ENCODE measurements at regions of chr1 and their contacts with region 1.

Region 1: GRCh38 chr1:110087812-110088738 is 17.6 kb upstream of the ALX3 start:
- DNase-seq: peak; percentile 53
- H3K4me3 ChIP-seq: no peak overlapping the region
- H3K27ac ChIP-seq: no peak overlapping the region
- H3K4me1 ChIP-seq: peaks cover 6% of the 10 kb centered on the region
- H3K27me3 ChIP-seq: peaks cover 49% of the 10 kb centered on the region in 2 experiments
- CTCF ChIP-seq: peak; percentile 57 to 66
- POLR2A ChIP-seq: no peak

Region 2: DNA sequence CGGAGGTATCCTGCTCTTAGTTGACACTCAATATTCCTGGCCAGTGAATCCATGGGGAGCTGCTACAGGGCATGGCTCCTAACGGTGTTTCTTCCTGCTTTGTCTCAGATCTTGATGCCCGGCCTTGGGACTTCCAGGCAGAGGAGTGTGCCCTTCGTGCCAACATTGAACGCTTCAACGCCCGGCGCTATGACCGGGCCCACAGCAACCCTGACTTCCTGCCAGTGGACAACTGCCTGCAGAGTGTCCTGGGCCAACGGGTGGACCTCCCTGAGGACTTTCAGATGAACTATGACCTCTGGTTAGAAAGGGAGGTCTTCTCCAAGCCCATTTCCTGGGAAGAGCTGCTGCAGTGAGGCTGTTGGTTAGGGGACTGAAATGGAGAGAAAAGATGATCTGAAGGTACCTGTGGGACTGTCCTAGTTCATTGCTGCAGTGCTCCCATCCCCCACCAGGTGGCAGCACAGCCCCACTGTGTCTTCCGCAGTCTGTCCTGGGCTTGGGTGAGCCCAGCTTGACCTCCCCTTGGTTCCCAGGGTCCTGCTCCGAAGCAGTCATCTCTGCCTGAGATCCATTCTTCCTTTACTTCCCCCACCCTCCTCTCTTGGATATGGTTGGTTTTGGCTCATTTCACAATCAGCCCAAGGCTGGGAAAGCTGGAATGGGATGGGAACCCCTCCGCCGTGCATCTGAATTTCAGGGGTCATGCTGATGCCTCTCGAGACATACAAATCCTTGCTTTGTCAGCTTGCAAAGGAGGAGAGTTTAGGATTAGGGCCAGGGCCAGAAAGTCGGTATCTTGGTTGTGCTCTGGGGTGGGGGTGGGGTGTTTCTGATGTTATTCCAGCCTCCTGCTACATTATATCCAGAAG is 34.3 kb before region 1 on chr1:
- CTCF ChIA-PET with region 1: interaction called, 23 read pairs
- POLR2A ChIA-PET with region 1: no interaction called
- dilution Hi-C with region 1: no loop called
- intact Hi-C with region 1: no loop called
- DNase-seq: peak; percentile 39
- H3K4me3 ChIP-seq: no peak overlapping the region
- H3K27ac ChIP-seq: no peak overlapping the region
- H3K4me1 ChIP-seq: no peaks in the 10 kb centered on the region
- H3K27me3 ChIP-seq: no peaks in the 10 kb centered on the region
- CTCF ChIP-seq: peak; percentile 83 to 97
- POLR2A ChIP-seq: no peak

Region 3: DNA sequence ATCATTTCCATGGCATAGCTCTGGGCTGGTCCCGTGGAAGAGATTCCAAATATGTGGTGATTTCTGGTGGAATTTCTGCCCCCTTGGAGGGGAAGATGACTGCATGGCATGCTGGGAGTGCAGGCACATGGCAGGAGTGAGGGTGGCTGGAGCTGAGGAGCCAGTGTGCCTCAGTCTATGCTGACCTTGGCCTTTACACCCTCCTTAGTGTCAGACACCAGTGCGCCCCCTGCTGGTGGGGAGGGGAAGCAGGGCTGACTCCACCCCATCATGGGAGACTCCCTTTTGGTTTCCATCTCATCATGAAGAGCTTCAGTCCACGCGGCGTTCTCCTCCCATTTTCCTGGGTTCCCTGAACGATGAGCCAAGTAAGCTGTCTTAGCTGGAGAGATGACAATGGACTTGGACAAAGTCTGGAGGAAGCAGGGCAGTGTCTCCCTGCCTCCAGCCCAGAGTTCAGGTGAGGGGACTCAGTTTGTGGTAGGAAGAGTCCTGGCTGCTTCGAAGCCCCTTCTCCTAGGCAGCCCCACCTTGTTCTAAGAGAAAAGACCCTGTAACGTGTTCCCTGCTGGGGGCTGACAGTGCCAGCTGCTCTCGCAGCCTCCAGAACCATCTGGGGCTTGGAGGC is 27.9 kb before region 1 on chr1:
- CTCF ChIA-PET with region 1: interaction called, 17 read pairs
- POLR2A ChIA-PET with region 1: no interaction called
- dilution Hi-C with region 1: no loop called
- intact Hi-C with region 1: no loop called
- DNase-seq: peak; percentile 22
- H3K4me3 ChIP-seq: no peak overlapping the region
- H3K27ac ChIP-seq: no peak overlapping the region
- H3K4me1 ChIP-seq: no peaks in the 10 kb centered on the region
- H3K27me3 ChIP-seq: no peaks in the 10 kb centered on the region
- CTCF ChIP-seq: peak; percentile 72 to 92
- POLR2A ChIP-seq: no peak

Region 4: GRCh38 chr1:110067893-110068645 is 20.0 kb before region 1 on chr1:
- CTCF ChIA-PET with region 1: interaction called, 23 read pairs
- POLR2A ChIA-PET with region 1: no interaction called
- dilution Hi-C with region 1: no loop called
- intact Hi-C with region 1: no loop called
- DNase-seq: peak; percentile 16
- H3K4me3 ChIP-seq: no peak overlapping the region
- H3K27ac ChIP-seq: no peak overlapping the region
- H3K4me1 ChIP-seq: no peaks in the 10 kb centered on the region
- H3K27me3 ChIP-seq: peaks cover 60 to 72% of the 10 kb centered on the region in 2 experiments
- CTCF ChIP-seq: no peak
- POLR2A ChIP-seq: no peak

Region 5: GRCh38 chr1:110076789-110077500 is 11.1 kb before region 1 on chr1:
- CTCF ChIA-PET with region 1: interaction called, 23 read pairs
- POLR2A ChIA-PET with region 1: no interaction called
- dilution Hi-C with region 1: no loop called
- intact Hi-C with region 1: no loop called
- DNase-seq: no peak
- H3K4me3 ChIP-seq: no peak overlapping the region
- H3K27ac ChIP-seq: no peak overlapping the region
- H3K4me1 ChIP-seq: no peaks in the 10 kb centered on the region
- H3K27me3 ChIP-seq: peaks cover 38 to 51% of the 10 kb centered on the region in 2 experiments
- CTCF ChIP-seq: no peak
- POLR2A ChIP-seq: no peak

Region 6: DNA sequence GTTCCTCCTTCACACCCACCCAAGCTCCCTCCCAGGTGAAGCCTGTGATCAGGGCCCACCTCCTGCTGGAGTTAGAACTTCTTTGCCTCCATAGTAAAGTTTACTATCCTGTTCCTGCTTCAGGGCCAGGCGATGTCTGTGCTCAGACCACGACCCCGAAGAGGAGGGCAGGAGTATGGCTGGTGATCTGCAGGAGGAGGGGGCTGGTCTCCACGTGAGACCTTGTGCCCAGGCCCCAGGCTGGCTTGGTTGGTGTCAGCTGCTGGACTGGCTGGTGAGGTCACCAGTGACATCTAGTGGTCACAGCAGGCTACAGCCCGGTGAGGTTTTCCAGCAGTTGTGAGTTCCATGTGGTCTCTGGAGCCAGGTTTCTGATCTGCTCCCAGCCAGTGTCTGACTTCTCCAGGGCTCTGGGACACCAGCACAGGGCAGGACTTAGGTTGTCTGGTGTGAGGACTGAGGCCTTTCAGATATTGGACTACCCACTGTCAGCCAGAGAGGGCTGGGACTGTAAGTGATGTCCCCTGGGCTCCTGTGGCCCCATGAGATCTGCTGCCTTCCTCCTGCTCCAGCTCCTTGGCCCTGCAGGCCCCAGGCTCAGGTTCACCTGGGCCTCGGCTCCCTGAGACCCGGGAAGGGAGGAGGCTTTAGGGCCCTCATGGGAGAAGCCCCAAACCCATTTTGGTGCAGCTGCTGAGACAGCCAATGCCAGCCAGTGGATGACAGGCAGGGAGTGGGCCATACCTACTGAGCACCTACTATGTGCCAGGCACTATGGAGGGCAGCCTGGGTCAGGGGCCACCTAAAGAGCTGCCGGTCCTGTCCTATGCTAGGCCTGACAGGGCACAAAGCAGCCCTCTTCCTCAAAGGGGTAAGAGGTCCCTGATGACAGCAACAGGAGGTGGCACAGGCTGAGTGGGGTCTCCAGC is 18.2 kb after region 1 on chr1:
- CTCF ChIA-PET with region 1: interaction called, 272 read pairs
- POLR2A ChIA-PET with region 1: no interaction called
- dilution Hi-C with region 1: no loop called
- intact Hi-C with region 1: loop called (anchors 1 kb)
- DNase-seq: peak; percentile 65
- H3K4me3 ChIP-seq: no peak overlapping the region
- H3K27ac ChIP-seq: no peak overlapping the region
- H3K4me1 ChIP-seq: peaks cover 3% of the 10 kb centered on the region
- H3K27me3 ChIP-seq: peaks cover 0 to 3% of the 10 kb centered on the region in 2 experiments
- CTCF ChIP-seq: peak; percentile 80 to 96
- POLR2A ChIP-seq: no peak

Region 7: GRCh38 chr1:110118636-110119615 is 30.9 kb after region 1 on chr1:
- CTCF ChIA-PET with region 1: interaction called, 54 read pairs
- POLR2A ChIA-PET with region 1: no interaction called
- dilution Hi-C with region 1: no loop called
- intact Hi-C with region 1: loop called (anchors 1 kb)
- DNase-seq: no peak
- H3K4me3 ChIP-seq: no peak overlapping the region
- H3K27ac ChIP-seq: no peak overlapping the region
- H3K4me1 ChIP-seq: no peaks in the 10 kb centered on the region
- H3K27me3 ChIP-seq: peaks cover 6 to 15% of the 10 kb centered on the region in 2 experiments
- CTCF ChIP-seq: no peak
- POLR2A ChIP-seq: no peak